ENCODE measurements at regions of chr15 and their contacts with region 1.

Region 1: GRCh38 chr15:41621200-41622193 is 38.7 kb upstream of the MGA start:
- DNase-seq: peak; percentile 77 to 80
- ATAC-seq: peak; percentile 83 to 86
- H3K4me3 ChIP-seq: peak overlapping the region; percentile 65 to 86 (median 83)
- H3K27ac ChIP-seq: peak overlapping the region; percentile 83 to 89 (median 88)
- H3K4me1 ChIP-seq: peaks cover 0 to 3% of the 10 kb centered on the region in 2 donors
- H3K27me3 ChIP-seq: no peaks in the 10 kb centered on the region
- CTCF ChIP-seq: no peak
- POLR2A ChIP-seq: peak; percentile 14 to 28

Region 2: GRCh38 chr15:40857601-40858341 is 763.7 kb before region 1 on chr15:
- in situ Hi-C with region 1: no loop called
- intact Hi-C with region 1: no loop called
- DNase-seq: peak in 1 of 2 donors; percentile 54
- ATAC-seq: peak; percentile 82 to 90
- H3K4me3 ChIP-seq: no peak overlapping the region
- H3K27ac ChIP-seq: no peak overlapping the region
- H3K4me1 ChIP-seq: no peaks in the 10 kb centered on the region
- H3K27me3 ChIP-seq: no peaks in the 10 kb centered on the region
- CTCF ChIP-seq: peak; percentile 76 to 93 (median 91)
- POLR2A ChIP-seq: no peak

Region 3: DNA sequence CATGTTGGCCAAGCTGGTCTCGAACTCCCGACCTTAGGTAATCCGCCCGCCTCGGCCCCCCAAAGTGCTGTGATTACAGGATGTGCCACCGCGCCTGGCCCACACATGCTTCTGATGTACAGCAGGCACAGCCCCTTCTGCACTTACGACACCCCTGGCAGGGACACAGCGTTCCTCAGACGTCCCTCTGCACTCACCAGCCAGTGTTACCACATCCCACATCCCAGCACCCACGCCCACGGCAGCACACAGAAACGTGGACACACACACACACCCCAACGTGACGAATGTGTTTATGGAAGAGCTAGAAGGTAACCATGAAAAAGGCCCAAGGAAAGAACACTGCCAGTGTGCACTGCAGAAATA is 76.9 kb before region 1 on chr15:
- in situ Hi-C with region 1: no loop called
- intact Hi-C with region 1: loop called (anchors 5 kb)
- DNase-seq: peak in 1 of 2 donors; percentile 54
- ATAC-seq: peak; percentile 14 to 35
- H3K4me3 ChIP-seq: peak overlapping the region; percentile 69 to 96 (median 90)
- H3K27ac ChIP-seq: peak overlapping the region; percentile 78 to 89 (median 86)
- H3K4me1 ChIP-seq: peaks cover 8 to 10% of the 10 kb centered on the region in 2 donors
- H3K27me3 ChIP-seq: no peaks in the 10 kb centered on the region
- CTCF ChIP-seq: no peak
- POLR2A ChIP-seq: no peak

Region 4: DNA sequence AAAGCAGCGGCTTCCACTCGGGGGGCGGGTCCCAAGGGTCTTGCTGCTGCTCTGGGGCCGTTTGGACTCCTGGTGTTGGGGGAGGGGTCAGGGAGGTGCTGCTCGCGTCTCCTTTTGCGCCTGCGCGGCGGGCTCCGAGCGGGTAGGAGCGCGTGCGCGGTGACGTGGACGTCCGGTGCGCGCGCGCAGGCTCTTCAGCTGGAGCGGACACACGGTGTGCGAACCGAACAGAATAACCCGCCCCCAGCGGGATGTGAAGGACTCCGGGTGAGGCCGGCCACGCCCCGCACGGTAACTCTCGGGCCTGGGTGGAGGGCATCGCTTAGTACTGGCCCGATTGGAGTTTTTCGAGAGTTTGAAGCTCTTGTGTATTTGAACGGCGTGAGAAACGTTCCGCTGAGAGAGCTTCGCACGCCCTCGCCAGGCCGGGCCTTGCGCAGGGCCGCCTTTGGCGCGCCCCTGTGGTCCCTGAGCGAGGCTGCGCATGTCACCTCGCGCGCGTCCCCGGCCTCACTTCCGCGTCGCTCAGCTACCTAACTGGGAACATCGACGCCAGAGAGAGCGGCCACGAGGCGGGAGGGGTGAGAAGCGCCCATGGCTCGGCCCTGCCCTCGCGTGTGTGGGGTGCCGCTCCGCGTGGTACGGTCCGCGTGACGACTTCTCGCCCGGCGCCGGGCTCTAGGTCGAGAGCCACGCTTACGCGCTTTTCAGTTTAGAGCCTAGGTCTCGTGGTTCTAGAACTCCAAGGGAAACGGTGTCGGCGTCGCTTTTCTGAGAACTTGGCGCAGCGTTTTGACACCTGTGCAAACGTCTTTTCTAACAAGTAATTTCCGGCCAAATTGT is 39.0 kb after region 1 on chr15 and contains the start of gene MGA:
- in situ Hi-C with region 1: no loop called
- intact Hi-C with region 1: loop called (anchors 1 kb)
- DNase-seq: peak; percentile 73 to 79
- ATAC-seq: peak; percentile 79 to 81
- H3K4me3 ChIP-seq: peak within 1 kb of the TSS; percentile 52 to 88 (median 70)
- H3K27ac ChIP-seq: peak within 1 kb of the TSS; percentile 70 to 83 (median 80)
- H3K4me1 ChIP-seq: peaks cover 38 to 40% of the 10 kb centered on the region in 2 donors
- H3K27me3 ChIP-seq: no peaks in the 10 kb centered on the region
- CTCF ChIP-seq: peak in 2 of 5 experiments; percentile 10 to 13
- POLR2A ChIP-seq: peak; percentile 38 to 71
- total RNA-seq, gene MGA: 17.0 to 27.8 (median 23.6) TPM

Region 5: DNA sequence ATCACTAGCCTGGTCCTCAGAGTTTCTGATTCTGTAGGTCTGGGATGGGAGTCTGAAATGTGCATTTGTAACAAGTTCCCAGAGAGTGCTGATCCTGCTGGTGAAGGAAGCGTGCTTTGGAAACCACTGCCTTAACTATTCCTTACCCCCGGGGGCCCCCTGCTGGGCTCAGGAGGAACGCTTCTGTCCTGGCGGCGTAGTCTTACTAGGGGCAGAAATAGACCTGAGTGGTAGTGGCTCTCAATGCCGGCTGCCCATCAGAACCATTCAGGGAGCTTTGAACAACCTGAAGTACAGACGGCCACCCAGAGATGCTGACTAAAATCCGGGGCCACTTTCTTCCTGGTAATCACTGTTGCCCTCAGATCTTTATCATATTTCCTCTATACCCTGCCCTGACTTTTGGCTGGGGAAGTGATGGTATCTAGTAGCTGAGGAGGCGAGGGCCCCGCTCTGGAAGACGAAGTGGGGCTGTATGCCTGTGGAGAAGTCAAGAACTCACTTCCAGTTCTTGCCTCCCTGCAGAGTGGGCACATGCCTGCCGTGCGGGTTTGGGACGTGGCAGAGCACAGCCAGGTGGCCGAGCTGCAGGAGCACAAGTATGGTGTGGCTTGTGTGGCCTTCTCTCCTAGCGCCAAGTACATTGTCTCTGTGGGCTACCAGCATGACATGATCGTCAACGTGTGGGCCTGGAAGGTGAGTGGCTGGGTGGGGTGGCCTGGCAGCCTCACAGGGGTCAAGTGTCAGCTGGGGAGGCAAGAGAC is 190.1 kb after region 1 on chr15:
- in situ Hi-C with region 1: loop called in 1 of 4 experiments (anchors 25 kb)
- intact Hi-C with region 1: no loop called
- DNase-seq: peak; percentile 67 to 80
- ATAC-seq: peak; percentile 94 to 97
- H3K4me3 ChIP-seq: no peak overlapping the region
- H3K27ac ChIP-seq: no peak overlapping the region
- H3K4me1 ChIP-seq: no peaks in the 10 kb centered on the region
- H3K27me3 ChIP-seq: no peaks in the 10 kb centered on the region
- CTCF ChIP-seq: peak; percentile 87 to 93 (median 93)
- POLR2A ChIP-seq: no peak

Measured in gastrocnemius medialis (tissue), 4 donors.